K562 (cell line): ENCODE measurements at regions of chr16 and their contacts with region 1.

Region 1: DNA sequence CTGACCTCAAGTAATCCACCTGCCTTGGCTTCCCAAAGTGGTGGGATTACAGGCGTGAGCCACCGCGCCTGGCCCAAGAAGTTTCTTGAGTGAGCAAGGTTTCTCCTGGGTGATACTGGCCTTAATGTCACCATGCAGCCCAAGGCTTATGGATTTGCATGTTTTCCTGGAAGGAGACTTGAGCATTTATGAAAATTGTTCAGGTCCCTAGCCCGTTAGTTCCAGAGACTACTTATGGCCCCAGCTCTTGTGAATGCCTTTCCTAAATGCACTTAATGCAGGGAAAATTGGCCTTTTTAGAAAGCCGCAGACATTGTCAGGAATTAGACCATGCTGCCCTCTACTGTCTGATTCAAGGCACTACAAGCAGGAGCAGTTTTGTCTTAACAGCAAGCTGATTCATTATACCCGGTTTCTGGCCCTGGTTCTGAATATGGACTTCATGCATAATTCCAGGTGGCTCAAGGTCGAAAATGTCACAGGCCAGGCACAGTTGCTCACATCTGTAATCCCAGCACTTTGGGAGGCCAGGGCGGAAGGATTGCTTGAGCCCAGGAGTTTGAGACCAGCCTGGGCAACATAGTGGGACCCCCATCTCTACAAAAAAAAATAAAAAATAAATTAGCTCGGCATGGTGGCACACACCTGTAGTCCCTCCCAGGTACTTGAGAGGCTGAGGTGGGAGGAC is 91.3 kb downstream of the SNX29 start:
- DNase-seq: peak; percentile 67 to 83 (median 72)
- ATAC-seq: peak; percentile 92
- H3K4me3 ChIP-seq: no peak overlapping the region
- H3K27ac ChIP-seq: no peak overlapping the region
- H3K4me1 ChIP-seq: peaks cover 4% of the 10 kb centered on the region in 2 experiments; a peak in 1 of 5 replicates
- H3K27me3 ChIP-seq: no peaks in the 10 kb centered on the region
- CTCF ChIP-seq: peak; percentile 86 to 95 (median 87)
- EP300 ChIP-seq: no peak
- POLR2A ChIP-seq: no peak
- RAD21 ChIP-seq: peak; percentile 94 to 98

Region 2: GRCh38 chr16:11949527-11949926 is 118.3 kb before region 1 on chr16:
- CTCF ChIA-PET with region 1: interaction called, 34 read pairs
- POLR2A ChIA-PET with region 1: interaction called, 6 read pairs
- in situ Hi-C with region 1: no loop called
- intact Hi-C with region 1: loop called (anchors 1 kb)
- DNase-seq: peak; percentile 44 to 74 (median 52)
- ATAC-seq: peak; percentile 96
- H3K4me3 ChIP-seq: no peak overlapping the region
- H3K27ac ChIP-seq: no peak overlapping the region
- H3K4me1 ChIP-seq: no peaks in the 10 kb centered on the region; a peak in 3 of 5 replicates
- H3K27me3 ChIP-seq: peaks cover 4 to 8% of the 10 kb centered on the region in 2 experiments; a peak in 3 of 5 replicates
- CTCF ChIP-seq: peak; percentile 72 to 88 (median 81)
- EP300 ChIP-seq: no peak
- POLR2A ChIP-seq: no peak
- RAD21 ChIP-seq: peak; percentile 89 to 93

Region 3: GRCh38 chr16:11977376-11978041 is 90.3 kb before region 1 on chr16:
- CTCF ChIA-PET with region 1: interaction called, 4 read pairs
- POLR2A ChIA-PET with region 1: interaction called, 3 read pairs
- in situ Hi-C with region 1: no loop called
- intact Hi-C with region 1: loop called (anchors 5 kb)
- DNase-seq: peak; percentile 41 to 49 (median 44)
- ATAC-seq: peak; percentile 24; the same call in 2 of the 3 replicates
- H3K4me3 ChIP-seq: peak overlapping the region; percentile 96
- H3K27ac ChIP-seq: no peak overlapping the region; the same call in 2 of the 3 replicates
- H3K4me1 ChIP-seq: peaks cover 2 to 27% of the 10 kb centered on the region in 2 experiments; a peak in 3 of 5 replicates
- H3K27me3 ChIP-seq: no peaks in the 10 kb centered on the region
- CTCF ChIP-seq: no peak
- EP300 ChIP-seq: no peak
- POLR2A ChIP-seq: no peak
- RAD21 ChIP-seq: no peak